ENCODE measurements at regions of chr1 and their contacts with region 1.

Region 1: DNA sequence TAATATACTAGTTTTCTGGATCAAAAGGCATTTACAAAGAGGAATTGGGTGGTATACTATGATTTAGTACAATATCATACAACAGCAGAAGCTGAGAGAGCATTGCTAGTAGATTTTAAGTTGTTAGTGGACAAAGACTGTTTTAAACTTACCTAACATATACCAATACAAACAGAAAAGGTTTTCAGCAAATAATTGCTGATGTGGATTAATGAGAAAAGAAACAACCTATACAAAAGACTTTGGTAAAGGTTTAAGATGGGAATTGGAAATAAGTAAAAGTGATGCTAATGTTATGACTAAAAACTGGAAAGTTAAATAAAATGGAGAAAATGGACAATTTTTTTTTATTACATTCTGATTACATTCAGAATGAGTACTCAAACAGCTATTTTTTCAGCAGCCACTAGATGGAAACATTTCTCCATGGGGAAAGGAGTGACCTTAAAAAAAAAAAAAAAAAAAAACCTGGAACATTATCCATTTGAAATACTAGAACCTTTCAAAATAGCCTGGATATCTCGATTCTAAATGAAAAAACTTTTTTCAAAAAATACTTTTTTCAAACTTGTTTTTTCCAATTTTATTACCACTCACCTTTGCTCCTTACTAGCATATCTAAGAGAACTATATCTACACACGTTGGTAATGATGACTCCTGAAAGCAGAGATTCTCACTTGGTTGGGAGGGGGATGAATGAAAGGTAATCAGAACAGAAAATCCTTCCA is 55.4 kb downstream of the EPRS1 start:
- DNase-seq: no peak
- H3K4me3 ChIP-seq: no peak overlapping the region
- H3K27ac ChIP-seq: no peak overlapping the region
- H3K4me1 ChIP-seq: no peaks in the 10 kb centered on the region
- H3K27me3 ChIP-seq: no peaks in the 10 kb centered on the region
- CTCF ChIP-seq: peak; percentile 64

Region 2: GRCh38 chr1:220056374-220056773 is 65.4 kb after region 1 on chr1:
- CTCF ChIA-PET with region 1: no interaction called
- POLR2A ChIA-PET with region 1: interaction called, 15 read pairs
- intact Hi-C with region 1: no loop called
- DNase-seq: no peak
- H3K4me3 ChIP-seq: no peak overlapping the region
- H3K27ac ChIP-seq: no peak overlapping the region
- H3K4me1 ChIP-seq: no peaks in the 10 kb centered on the region
- H3K27me3 ChIP-seq: no peaks in the 10 kb centered on the region
- CTCF ChIP-seq: no peak

Measured in PC-9 (cell line).